Mammary epithelial cell (primary cell): ENCODE measurements at regions of chr18 and their contacts with region 1.

Region 1: DNA sequence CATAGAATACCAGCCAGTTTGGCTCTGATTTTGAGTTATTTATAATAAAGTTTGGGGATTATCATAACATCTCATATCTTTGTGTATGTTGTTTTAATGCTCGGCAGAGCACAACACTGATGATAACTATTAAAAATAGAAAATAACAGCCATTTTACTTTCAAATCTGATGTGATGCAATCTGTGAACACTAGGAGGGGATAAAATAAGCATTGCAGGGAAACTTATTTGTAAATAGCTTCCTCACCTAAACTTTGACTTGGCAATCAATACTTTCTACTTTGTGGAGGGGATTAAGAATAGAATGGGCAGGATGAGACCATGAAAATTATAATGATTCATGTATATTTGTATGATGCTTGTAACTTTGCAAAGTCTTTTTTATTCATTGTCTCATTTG is 54.4 kb downstream of the USP14 start:
- DNase-seq: no peak
- H3K4me3 ChIP-seq: no peak overlapping the region
- H3K27ac ChIP-seq: no peak overlapping the region
- H3K4me1 ChIP-seq: no peaks in the 10 kb centered on the region
- H3K27me3 ChIP-seq: no peaks in the 10 kb centered on the region
- CTCF ChIP-seq: no peak

Region 2: GRCh38 chr18:172361-172760 is 40.4 kb before region 1 on chr18:
- CTCF ChIA-PET with region 1: no interaction called
- dilution Hi-C with region 1: no loop called
- in situ Hi-C with region 1: no loop called
- intact Hi-C with region 1: loop called (anchors 5 kb)
- DNase-seq: no peak
- H3K4me3 ChIP-seq: no peak overlapping the region
- H3K27ac ChIP-seq: no peak overlapping the region
- H3K4me1 ChIP-seq: no peaks in the 10 kb centered on the region
- H3K27me3 ChIP-seq: no peaks in the 10 kb centered on the region
- CTCF ChIP-seq: no peak

Region 3: GRCh38 chr18:240175-240574 is 27.4 kb after region 1 on chr18:
- CTCF ChIA-PET with region 1: no interaction called
- dilution Hi-C with region 1: loop called (anchors 5 kb)
- in situ Hi-C with region 1: no loop called
- intact Hi-C with region 1: no loop called
- DNase-seq: no peak
- H3K4me3 ChIP-seq: no peak overlapping the region
- H3K27ac ChIP-seq: no peak overlapping the region
- H3K4me1 ChIP-seq: no peaks in the 10 kb centered on the region
- H3K27me3 ChIP-seq: no peaks in the 10 kb centered on the region
- CTCF ChIP-seq: no peak

Region 4: GRCh38 chr18:1034971-1035370 is 822.2 kb after region 1 on chr18:
- CTCF ChIA-PET with region 1: no interaction called
- dilution Hi-C with region 1: no loop called
- in situ Hi-C with region 1: no loop called
- intact Hi-C with region 1: no loop called
- DNase-seq: no peak
- H3K4me3 ChIP-seq: no peak overlapping the region
- H3K27ac ChIP-seq: no peak overlapping the region
- H3K4me1 ChIP-seq: no peaks in the 10 kb centered on the region
- H3K27me3 ChIP-seq: no peaks in the 10 kb centered on the region
- CTCF ChIP-seq: no peak